ENCODE measurements at regions of chr3 and their contacts with region 1.

Region 1: DNA sequence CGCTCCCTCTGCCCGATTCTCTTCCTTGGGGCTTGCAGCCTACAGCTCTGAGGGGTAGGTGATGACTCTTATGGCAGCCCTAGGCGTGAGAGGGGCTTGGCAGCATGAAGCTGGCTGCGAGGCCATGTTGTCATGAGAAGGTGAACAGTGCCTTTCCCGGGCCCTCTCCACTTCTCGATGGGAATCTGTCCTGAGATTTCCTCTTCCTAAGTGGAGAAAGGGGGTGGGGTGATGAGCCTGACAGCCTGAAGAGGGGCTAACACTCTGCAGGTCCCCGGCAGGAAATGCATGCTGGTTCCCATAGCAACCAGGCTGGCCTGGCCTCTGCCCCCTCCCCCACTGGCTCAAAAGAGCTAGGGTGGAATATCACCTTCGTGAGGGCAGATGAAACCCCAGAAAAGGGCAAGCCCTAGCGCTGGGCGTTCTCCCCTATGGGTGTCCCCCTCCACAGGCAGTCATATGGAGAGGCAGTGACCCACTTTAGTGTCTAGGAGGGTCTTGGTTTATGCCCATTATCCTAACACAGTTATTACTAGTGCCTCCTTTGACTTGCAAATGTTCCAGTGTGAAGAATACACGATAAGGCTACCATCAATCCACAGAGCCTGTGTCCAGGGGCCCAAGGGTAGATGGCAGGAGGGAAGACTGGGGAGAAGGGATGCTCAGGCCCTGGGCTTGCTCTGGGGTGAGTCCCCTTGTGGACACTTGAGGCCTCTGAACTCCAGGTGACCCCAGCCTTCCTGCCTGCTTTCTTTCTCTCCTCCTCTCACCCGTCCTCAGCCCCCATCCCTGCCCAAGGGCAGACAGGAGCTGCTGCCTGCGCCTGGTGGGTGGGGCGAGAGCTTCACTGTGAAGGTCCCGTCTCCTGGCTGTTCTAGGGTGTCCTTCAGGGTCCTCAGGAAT is 13.2 kb downstream of the EPHB3 start:
- DNase-seq: no peak
- H3K4me3 ChIP-seq: no peak overlapping the region
- H3K27ac ChIP-seq: no peak overlapping the region
- H3K4me1 ChIP-seq: peaks cover 10% of the 10 kb centered on the region
- H3K27me3 ChIP-seq: no peaks in the 10 kb centered on the region
- CTCF ChIP-seq: no peak
- EP300 ChIP-seq: no peak
- POLR2A ChIP-seq: no peak

Region 2: DNA sequence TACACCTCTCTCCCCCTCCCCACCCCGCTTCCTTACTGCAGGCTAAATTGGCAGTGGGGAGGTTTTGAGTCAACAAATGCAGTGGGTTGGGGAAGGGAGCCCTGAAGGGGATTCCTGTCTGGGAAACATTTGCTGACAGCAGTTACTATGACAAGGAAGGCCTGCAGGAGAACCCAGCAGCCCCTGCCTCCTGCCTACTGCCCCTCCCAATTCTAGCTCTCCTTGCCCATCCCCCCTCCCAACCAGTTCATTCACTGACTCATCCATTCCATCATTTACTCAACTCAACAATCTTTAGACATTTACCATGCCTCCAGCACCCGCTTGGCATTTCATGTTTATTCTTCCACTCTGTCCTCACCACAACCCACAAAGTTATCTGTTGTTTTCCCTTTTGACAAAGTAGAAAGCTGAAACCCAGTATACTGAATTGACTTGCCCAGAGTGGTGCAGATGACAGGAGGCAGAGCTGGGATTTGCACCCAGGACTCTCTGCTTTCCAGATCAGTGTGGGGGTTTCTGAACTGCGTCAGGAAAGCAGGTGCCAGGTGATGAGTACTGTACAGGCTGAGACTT is 62.1 kb after region 1 on chr3:
- intact Hi-C with region 1: no loop called
- DNase-seq: no peak
- H3K4me3 ChIP-seq: no peak overlapping the region
- H3K27ac ChIP-seq: no peak overlapping the region
- H3K4me1 ChIP-seq: no peaks in the 10 kb centered on the region
- H3K27me3 ChIP-seq: no peaks in the 10 kb centered on the region
- CTCF ChIP-seq: no peak
- EP300 ChIP-seq: no peak
- POLR2A ChIP-seq: no peak

Region 3: DNA sequence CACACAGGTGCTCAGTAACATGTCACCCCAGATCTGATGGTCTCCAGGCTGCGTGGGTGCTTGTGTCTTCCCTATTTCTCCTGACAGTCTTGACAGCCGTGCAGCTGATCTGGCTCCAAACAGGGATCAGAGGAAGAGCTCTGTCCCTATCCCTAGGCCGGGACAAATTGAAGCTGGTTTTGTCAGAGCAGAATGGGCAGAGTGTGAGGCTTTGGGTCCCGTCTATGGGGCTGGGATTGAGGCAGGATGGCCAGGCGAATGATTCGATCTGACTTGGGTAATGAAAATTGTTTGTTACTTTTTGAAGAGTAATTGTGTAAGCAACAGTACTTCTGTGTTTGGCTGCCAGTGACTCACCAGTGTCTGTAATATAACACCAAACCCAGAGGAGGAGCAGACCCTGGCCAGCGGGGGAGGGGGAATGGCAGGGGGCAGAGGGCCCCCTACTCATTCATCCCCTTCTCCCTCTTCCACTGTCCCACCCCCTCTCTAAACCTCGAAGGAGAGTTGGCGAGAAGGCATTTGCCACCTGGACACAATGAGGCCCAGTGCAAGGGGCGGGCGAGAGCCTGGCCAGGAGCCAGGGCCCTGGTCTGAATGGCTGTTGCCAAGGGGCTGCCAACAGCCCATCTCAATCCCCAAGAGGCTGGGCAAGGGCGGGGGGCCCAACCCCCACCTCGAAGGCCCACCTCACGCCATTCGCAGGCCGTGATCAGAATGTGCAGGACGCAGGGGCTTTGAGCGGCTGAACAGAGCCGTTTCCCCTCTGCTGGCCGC is 142.0 kb after region 1 on chr3:
- intact Hi-C with region 1: loop called in 2 of 4 experiments (anchors 5 kb)
- DNase-seq: peak; percentile 58 to 74 (median 64)
- H3K4me3 ChIP-seq: no peak overlapping the region
- H3K27ac ChIP-seq: peak overlapping the region; percentile 64
- H3K4me1 ChIP-seq: peaks cover 9% of the 10 kb centered on the region
- H3K27me3 ChIP-seq: no peaks in the 10 kb centered on the region
- CTCF ChIP-seq: no peak
- EP300 ChIP-seq: no peak
- POLR2A ChIP-seq: peak; percentile 7